ENCODE measurements at regions of chr4 and their contacts with region 1.

Region 1: GRCh38 chr4:114077610-114078009 is 98.2 kb upstream of the ARSJ start:
- DNase-seq: no peak
- H3K4me3 ChIP-seq: no peak overlapping the region
- H3K27ac ChIP-seq: no peak overlapping the region
- H3K4me1 ChIP-seq: peaks cover 0 to 6% (median 0%) of the 10 kb centered on the region in 4 donors
- H3K27me3 ChIP-seq: no peaks in the 10 kb centered on the region
- CTCF ChIP-seq: no peak
- EP300 ChIP-seq: no peak
- POLR2A ChIP-seq: no peak

Region 2: DNA sequence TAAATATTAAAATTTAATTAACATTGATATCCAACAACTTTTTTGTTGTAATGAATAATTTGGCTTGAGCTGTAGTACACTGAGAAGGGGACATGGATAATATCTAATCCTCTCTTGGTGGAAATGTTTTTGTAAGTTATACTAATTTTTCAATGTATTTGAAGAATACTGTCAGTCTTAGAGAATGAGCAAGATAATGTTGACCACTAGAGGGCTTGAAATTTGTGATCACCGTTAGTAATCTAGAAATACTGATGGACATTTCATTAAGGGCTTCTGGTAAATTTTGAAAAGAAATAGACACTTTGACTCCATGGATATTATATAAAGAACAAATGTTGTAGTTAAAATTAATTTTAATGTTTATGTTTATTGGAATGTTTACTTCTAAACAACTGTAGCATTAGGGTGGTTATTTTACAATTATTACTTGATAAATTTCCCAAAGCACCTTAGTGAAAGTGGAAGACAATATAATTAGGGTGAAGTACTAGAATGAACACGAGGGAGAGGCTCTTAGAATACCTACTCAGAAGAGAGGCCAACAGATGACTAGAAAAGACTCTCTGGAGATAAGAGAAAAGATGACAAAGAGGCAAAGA is 296.1 kb before region 1 on chr4:
- intact Hi-C with region 1: loop called (anchors 5 kb)
- DNase-seq: no peak
- H3K4me3 ChIP-seq: no peak overlapping the region
- H3K27ac ChIP-seq: no peak overlapping the region
- H3K4me1 ChIP-seq: peaks cover 0 to 10% (median 9%) of the 10 kb centered on the region in 4 donors
- H3K27me3 ChIP-seq: no peaks in the 10 kb centered on the region
- CTCF ChIP-seq: peak; percentile 51 to 71 (median 66)
- EP300 ChIP-seq: no peak
- POLR2A ChIP-seq: no peak

Region 3: GRCh38 chr4:113952452-113953029 is 125.1 kb before region 1 on chr4:
- intact Hi-C with region 1: loop called (anchors 10 kb)
- DNase-seq: no peak
- H3K4me3 ChIP-seq: no peak overlapping the region
- H3K27ac ChIP-seq: peak overlapping the region in 1 of 4 donors; percentile 72
- H3K4me1 ChIP-seq: peaks cover 13 to 47% (median 39%) of the 10 kb centered on the region in 4 donors
- H3K27me3 ChIP-seq: no peaks in the 10 kb centered on the region
- CTCF ChIP-seq: peak; percentile 60 to 79 (median 69)
- EP300 ChIP-seq: no peak
- POLR2A ChIP-seq: no peak